ENCODE measurements at regions of chr1 and their contacts with region 1.

Region 1: DNA sequence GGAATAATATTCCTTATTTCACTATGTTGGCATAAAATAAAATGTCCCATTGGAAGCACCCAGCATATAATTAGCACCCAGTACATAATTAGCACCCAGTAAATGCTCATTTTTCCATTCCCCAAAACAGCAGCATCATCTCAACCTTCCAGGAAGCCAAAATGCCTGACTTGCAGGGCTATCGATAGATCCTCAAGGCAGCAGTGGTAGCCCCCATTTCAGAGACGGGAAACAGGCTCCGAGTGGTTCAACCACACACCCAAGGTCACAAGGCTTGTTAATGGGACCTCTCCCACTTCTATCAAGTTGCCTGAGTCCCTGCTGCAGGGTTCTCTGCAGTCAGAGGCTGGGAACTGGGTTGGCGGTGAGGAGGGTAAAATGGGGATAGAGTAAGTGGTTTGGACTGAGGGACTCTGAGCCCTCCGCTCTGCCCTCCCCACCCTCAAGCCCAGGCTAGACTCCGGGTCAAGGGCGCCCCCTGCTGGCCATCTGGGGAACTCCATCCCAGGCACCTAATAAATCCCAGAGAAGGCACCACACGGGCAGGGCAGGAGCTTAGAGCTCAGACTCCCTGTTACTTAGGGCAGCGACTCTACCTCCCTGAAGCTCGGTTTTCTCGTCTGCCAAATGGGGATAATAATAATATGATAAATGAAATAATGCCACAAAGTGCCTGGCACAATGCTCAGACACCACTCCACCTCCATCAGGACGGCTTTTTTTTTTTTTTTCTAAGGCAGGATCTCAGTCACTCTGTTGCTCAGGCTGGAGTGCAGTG is 21.9 kb upstream of the LAPTM5 start:
- DNase-seq: peak; percentile 72 to 93
- H3K4me3 ChIP-seq: no peak overlapping the region
- H3K27ac ChIP-seq: no peak overlapping the region
- H3K4me1 ChIP-seq: peaks cover 0 to 2% of the 10 kb centered on the region in 2 donors
- H3K27me3 ChIP-seq: no peaks in the 10 kb centered on the region
- CTCF ChIP-seq: peak; percentile 94 to 98 (median 94)

Region 2: GRCh38 chr1:30801771-30802198 is 22.3 kb after region 1 on chr1:
- intact Hi-C with region 1: loop called (anchors 1 kb)
- DNase-seq: peak in 1 of 2 donors; percentile 89
- H3K4me3 ChIP-seq: peak overlapping the region in 1 of 2 donors; percentile 38
- H3K27ac ChIP-seq: no peak overlapping the region
- H3K4me1 ChIP-seq: no peaks in the 10 kb centered on the region
- H3K27me3 ChIP-seq: no peaks in the 10 kb centered on the region
- CTCF ChIP-seq: peak; percentile 94 to 98 (median 95)

Region 3: GRCh38 chr1:30929135-30929889 is 149.8 kb after region 1 on chr1:
- intact Hi-C with region 1: loop called (anchors 1 kb)
- DNase-seq: no peak
- H3K4me3 ChIP-seq: no peak overlapping the region
- H3K27ac ChIP-seq: no peak overlapping the region
- H3K4me1 ChIP-seq: no peaks in the 10 kb centered on the region
- H3K27me3 ChIP-seq: no peaks in the 10 kb centered on the region
- CTCF ChIP-seq: peak; percentile 53 to 78 (median 57)